Cardiac septum (tissue), 1 donor: ENCODE measurements at regions of chr12 and their contacts with region 1.

Region 1: GRCh38 chr12:2301531-2302461 is 249.0 kb downstream of the CACNA1C start:
- DNase-seq: no peak

Region 2: DNA sequence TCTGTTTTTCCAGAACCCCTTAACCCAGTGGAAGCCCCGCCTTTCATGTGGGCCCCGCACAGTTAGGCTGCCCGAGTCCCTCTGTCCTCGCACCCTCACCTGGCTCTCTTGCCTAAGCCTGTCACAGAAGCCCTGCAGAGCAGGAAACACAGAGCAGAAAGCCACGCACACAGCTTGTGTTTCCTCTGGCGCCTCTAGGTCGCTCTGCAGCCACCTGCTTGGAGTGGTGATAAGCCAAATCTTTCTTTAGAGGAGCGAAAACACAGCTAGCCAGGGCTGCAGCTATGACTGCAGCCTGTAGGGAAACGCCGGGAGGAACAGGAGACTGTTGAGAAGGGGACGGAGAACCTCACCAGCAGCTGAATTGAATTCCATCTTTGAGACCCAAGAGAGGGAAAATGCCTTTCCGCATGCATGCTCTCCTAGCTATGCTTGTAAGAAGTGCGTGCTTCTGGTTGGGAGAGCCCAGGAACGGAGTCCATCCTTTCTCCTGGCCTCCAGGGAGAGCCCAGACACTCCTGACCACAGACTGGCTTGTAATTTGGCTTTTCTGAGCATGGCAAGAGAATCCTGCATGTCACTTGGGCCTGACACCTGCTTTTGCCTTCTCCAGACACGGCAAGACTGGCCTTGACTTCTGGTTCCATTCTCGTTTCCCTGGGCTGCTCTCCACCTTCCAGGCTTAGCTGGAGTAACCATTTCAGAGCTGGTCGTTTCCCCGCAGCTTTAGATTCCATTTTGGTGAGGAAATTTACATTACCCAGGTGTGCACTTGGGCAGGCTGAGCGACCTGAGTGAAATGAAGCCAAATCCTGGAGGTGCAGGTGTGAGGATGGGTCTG is 52.6 kb after region 1 on chr12:
- intact Hi-C with region 1: loop called (anchors 5 kb)
- DNase-seq: no peak

Region 3: GRCh38 chr12:2411616-2412304 is 110.0 kb after region 1 on chr12:
- intact Hi-C with region 1: no loop called
- DNase-seq: no peak

Region 4: GRCh38 chr12:2513141-2514037 is 211.6 kb after region 1 on chr12:
- intact Hi-C with region 1: no loop called
- DNase-seq: no peak

Region 5: DNA sequence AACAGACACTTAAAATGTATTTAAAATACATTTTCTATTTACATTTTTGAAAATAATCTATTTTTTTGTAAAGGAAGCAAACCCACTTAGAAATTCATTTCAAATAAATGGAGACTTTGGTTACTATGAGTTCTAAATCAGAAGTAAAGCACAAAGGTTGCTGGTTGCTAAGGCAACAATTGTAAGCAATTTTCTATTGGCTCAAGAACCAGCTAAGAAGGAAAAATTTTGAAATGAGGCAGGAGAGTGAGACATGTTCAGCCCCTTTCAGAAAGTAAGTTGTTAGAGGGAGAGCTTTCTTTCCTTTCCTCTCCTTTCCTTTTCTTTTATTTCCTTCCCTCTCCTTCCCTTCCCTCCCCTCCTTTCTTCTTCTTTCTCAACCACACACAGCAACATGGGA is 1269.9 kb after region 1 on chr12:
- intact Hi-C with region 1: no loop called
- DNase-seq: no peak